Activated naive CD4-positive, alpha-beta T cell treated with anti-CD3 and anti-CD28 coated beads for 36 hours (primary cell): ENCODE measurements at regions of chr12 and their contacts with region 1.

Region 1: DNA sequence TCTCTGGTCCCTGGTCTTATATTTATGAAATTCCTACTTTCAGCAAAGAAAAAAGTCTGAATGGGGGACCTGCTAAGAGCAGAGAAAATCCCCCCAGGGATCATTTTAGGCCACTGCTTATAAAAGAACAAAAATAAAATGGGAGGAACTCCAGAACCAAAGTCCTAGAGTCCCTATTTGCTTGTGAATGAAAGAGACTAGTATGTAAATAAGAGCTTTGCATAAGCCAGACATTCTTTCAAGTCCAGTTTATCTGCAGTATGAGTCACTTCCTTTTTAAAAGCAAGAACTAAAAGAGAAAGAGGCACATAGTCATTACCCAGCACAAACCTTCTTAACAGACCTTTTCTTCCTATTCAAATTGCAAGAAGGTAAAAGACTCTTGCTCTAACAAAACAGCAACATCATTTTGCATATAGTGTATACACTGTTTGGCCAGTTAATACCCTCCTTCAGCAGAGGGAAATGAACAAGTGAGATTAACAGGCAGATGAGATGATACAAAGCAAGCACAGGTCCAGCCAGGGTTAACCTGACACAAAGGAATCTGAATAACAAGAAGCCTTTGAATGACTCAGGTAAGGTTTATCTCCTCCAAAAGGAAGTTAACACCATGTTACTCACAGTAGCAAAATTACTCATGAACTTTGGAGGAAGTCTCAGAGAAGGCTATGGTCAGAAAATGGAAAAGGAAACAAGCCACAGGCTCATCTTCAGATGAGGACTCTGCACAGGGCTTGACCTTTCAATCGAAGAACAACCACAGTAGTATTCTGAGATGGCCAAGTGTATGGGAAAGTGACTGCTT is 87.3 kb downstream of the PHLDA1 start:
- DNase-seq: peak; percentile 44
- H3K4me3 Mint-ChIP-seq: no peak overlapping the region
- H3K27ac Mint-ChIP-seq: peak overlapping the region; percentile 87
- H3K4me1 Mint-ChIP-seq: peaks cover 22% of the 10 kb centered on the region
- H3K27me3 Mint-ChIP-seq: no peaks in the 10 kb centered on the region

Region 2: DNA sequence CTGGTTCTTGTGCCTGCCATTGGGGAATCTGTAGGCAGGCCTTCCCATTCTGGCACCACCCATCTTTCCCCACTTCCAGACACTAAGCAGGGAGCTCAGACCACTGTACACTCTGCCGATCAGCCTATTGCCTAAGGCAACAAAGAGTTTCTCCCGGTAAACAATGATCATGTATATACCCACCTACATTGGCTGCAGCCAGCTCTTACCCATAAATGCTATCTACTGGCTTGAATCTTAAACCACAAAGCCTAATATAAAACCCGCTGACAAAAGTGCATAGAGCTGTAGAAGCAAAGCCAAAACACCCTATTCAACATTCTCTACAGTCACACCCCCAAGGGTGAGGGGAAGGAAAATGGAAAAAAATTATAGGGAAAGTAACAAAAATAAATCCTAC is 484.5 kb before region 1 on chr12:
- CTCF ChIA-PET with region 1: no interaction called
- intact Hi-C with region 1: no loop called
- DNase-seq: no peak
- H3K4me3 Mint-ChIP-seq: no peak overlapping the region
- H3K27ac Mint-ChIP-seq: no peak overlapping the region
- H3K4me1 Mint-ChIP-seq: peaks cover 15% of the 10 kb centered on the region
- H3K27me3 Mint-ChIP-seq: no peaks in the 10 kb centered on the region

Region 3: DNA sequence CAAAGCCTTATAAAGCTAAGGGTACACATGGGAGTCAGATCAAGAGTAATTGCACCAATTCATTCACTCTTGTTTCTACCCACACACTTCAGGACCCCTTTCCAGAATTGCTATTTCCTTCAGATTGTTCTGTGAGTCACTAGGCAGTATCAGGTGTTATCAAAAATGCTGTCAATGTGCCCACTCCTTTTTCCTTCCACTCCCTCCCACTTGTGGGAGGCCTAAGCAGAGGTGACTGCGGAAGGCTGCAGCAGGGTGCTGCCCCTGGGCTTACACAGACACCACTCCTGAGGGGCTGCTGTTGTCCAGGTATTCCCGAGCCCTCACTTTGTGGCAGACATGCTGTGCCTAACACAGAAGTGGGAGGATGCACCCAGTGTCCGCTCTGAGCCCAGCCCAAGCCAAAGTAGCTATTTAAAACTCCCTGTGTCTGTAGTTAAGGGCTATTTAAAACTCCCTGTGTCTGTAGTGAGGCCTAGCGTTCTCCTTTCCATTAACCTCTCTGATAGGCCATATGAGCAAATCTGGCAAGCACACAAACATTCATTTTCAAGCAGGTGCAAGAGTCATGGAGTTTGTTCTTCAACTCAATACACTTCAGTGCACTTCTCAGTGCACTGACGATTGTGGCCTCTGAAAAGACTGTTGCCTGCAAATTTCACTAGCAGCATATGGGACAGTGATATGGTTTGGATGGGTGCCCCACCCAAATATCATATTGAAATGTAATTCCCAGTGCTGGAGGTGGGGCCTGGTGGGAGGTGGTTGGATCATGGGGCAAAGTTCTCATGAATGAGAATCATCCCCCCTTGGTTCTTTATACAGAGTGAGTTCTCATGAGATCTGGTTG is 30.6 kb before region 1 on chr12:
- CTCF ChIA-PET with region 1: interaction called, 5 read pairs
- intact Hi-C with region 1: loop called (anchors 1 kb)
- DNase-seq: peak; percentile 49
- H3K4me3 Mint-ChIP-seq: no peak overlapping the region
- H3K27ac Mint-ChIP-seq: no peak overlapping the region
- H3K4me1 Mint-ChIP-seq: peaks cover 21% of the 10 kb centered on the region
- H3K27me3 Mint-ChIP-seq: no peaks in the 10 kb centered on the region

Region 4: GRCh38 chr12:75969768-75970167 is 25.5 kb after region 1 on chr12:
- CTCF ChIA-PET with region 1: no interaction called
- intact Hi-C with region 1: no loop called
- DNase-seq: no peak
- H3K4me3 Mint-ChIP-seq: no peak overlapping the region
- H3K27ac Mint-ChIP-seq: no peak overlapping the region
- H3K4me1 Mint-ChIP-seq: peaks cover 36% of the 10 kb centered on the region
- H3K27me3 Mint-ChIP-seq: peaks cover 4% of the 10 kb centered on the region

Region 5: DNA sequence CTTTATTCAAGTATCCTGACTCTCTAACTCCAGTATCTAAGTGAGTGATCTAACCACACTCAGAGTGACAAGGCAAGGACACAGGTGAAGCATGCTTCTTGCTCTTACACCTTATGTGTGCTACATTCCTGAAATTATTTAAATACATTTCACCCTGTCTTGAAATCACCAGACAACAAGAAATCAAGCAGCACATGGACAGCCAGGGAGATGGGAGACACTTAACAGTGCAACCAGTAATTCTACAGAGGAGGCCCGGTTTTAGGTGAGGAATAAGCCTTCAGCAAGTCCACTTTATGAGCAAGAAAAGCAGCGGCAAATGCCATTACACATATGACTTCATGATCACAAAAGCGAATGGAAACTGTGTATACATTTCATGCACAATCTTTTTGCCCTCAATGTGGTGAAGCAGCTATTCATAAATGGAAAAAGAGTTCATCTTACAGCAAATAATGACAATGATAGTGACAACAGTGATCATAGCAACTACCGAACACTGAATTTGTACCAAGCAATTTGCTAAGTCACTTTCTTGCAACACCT is 50.0 kb after region 1 on chr12:
- CTCF ChIA-PET with region 1: no interaction called
- intact Hi-C with region 1: loop called (anchors 1 kb)
- DNase-seq: no peak
- H3K4me3 Mint-ChIP-seq: no peak overlapping the region
- H3K27ac Mint-ChIP-seq: no peak overlapping the region
- H3K4me1 Mint-ChIP-seq: peaks cover 17% of the 10 kb centered on the region
- H3K27me3 Mint-ChIP-seq: no peaks in the 10 kb centered on the region

Region 6: DNA sequence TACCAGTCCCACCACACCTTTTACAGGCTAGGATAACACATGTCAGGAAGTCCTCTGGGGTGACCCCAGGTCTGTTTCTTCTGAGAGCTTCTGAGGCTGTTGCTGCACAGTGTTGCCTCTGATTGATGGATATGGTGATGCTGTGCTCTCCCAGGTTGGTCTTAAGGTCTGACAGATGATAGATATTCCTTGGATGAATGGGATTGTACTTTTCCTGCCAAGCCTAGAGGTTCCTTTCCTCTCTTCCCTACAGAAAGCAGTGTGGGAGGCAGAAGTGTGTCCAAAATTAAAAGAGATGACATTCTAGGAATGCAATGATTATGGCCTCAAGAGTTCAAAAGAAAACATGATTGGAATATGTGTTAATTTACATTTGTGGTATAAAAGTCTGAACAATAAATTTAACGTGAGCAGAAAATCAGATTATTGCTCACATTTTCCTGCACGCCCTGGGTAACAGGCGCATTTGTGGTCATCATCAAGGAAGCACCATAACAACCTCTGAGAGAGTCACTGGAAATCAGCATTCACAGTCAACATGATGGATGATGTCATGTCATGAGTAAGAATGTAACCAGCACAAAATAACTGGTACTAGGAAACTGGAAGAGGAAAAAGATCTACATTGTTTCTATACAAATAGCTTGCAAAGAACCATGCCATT is 330.3 kb after region 1 on chr12:
- CTCF ChIA-PET with region 1: no interaction called
- intact Hi-C with region 1: loop called (anchors 1 kb)
- DNase-seq: peak; percentile 58
- H3K4me3 Mint-ChIP-seq: no peak overlapping the region
- H3K27ac Mint-ChIP-seq: peak overlapping the region; percentile 10
- H3K4me1 Mint-ChIP-seq: peaks cover 12% of the 10 kb centered on the region
- H3K27me3 Mint-ChIP-seq: peaks cover 11% of the 10 kb centered on the region